Mammary epithelial cell (primary cell): ENCODE measurements at regions of chr2 and their contacts with region 1.

Region 1: GRCh38 chr2:14634201-14634884 is 1.8 kb downstream of the LRATD1 start:
- DNase-seq: peak; percentile 86
- H3K4me3 ChIP-seq: peak overlapping the region; percentile 59 to 83 (median 66)
- H3K27ac ChIP-seq: peak overlapping the region; percentile 50
- H3K4me1 ChIP-seq: peaks cover 46% of the 10 kb centered on the region
- H3K27me3 ChIP-seq: no peaks in the 10 kb centered on the region
- CTCF ChIP-seq: peak; percentile 66 to 90

Region 2: DNA sequence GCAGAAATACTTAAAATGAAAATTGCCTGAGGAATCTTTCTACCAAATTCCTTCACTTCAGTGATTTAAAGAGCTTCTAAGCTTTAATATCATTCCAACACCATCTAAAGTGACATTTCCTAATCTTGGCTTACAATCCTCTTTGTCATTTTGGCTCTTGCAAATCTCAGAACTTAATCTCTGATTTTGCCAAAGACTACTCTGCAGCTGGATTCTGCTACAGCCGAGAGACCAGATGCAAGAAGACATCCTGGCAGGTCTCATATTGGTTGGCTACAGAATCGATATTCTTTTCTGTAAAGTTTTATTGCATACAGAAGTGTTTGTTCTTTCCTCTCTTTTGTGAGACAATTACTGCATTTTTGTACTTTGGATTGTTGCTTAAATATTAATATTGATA is 718.3 kb before region 1 on chr2:
- CTCF ChIA-PET with region 1: no interaction called
- dilution Hi-C with region 1: no loop called
- in situ Hi-C with region 1: no loop called
- intact Hi-C with region 1: no loop called
- DNase-seq: no peak
- H3K4me3 ChIP-seq: no peak overlapping the region
- H3K27ac ChIP-seq: no peak overlapping the region
- H3K4me1 ChIP-seq: no peaks in the 10 kb centered on the region
- H3K27me3 ChIP-seq: no peaks in the 10 kb centered on the region
- CTCF ChIP-seq: no peak

Region 3: GRCh38 chr2:14385043-14385442 is 249.3 kb before region 1 on chr2:
- CTCF ChIA-PET with region 1: interaction called, 4 read pairs
- dilution Hi-C with region 1: no loop called
- in situ Hi-C with region 1: no loop called
- intact Hi-C with region 1: loop called (anchors 2 kb)
- DNase-seq: peak; percentile 9
- H3K4me3 ChIP-seq: no peak overlapping the region
- H3K27ac ChIP-seq: no peak overlapping the region
- H3K4me1 ChIP-seq: no peaks in the 10 kb centered on the region
- H3K27me3 ChIP-seq: no peaks in the 10 kb centered on the region
- CTCF ChIP-seq: peak; percentile 14 to 27

Region 4: GRCh38 chr2:14492920-14493503 is 141.3 kb before region 1 on chr2:
- CTCF ChIA-PET with region 1: no interaction called
- dilution Hi-C with region 1: no loop called
- in situ Hi-C with region 1: no loop called
- intact Hi-C with region 1: loop called (anchors 2 kb)
- DNase-seq: peak; percentile 96
- H3K4me3 ChIP-seq: no peak overlapping the region
- H3K27ac ChIP-seq: peak overlapping the region; percentile 53
- H3K4me1 ChIP-seq: peaks cover 8% of the 10 kb centered on the region
- H3K27me3 ChIP-seq: no peaks in the 10 kb centered on the region
- CTCF ChIP-seq: no peak

Region 5: DNA sequence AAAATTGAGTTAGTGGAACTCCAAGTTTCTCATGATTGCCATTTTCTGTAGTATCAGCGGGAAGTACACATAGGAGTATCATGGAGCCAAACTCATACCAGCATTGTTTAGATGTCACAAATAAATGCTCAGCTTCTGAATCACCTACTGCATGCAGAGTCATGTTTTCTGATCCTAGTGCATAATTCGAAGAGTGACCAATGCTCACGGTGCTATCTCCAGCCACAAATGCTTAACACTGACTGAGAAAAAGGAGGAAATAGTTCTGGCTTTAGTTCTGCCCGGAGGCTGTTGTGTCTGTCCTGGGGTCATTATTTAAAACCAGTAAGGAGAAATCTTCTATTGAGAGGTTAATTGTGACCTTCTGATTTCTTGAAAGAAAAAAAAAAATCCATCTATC is 47.2 kb before region 1 on chr2:
- CTCF ChIA-PET with region 1: no interaction called
- dilution Hi-C with region 1: no loop called
- in situ Hi-C with region 1: no loop called
- intact Hi-C with region 1: loop called (anchors 2 kb)
- DNase-seq: peak; percentile 86
- H3K4me3 ChIP-seq: no peak overlapping the region
- H3K27ac ChIP-seq: peak overlapping the region; percentile 49
- H3K4me1 ChIP-seq: peaks cover 11% of the 10 kb centered on the region
- H3K27me3 ChIP-seq: no peaks in the 10 kb centered on the region
- CTCF ChIP-seq: no peak

Region 6: DNA sequence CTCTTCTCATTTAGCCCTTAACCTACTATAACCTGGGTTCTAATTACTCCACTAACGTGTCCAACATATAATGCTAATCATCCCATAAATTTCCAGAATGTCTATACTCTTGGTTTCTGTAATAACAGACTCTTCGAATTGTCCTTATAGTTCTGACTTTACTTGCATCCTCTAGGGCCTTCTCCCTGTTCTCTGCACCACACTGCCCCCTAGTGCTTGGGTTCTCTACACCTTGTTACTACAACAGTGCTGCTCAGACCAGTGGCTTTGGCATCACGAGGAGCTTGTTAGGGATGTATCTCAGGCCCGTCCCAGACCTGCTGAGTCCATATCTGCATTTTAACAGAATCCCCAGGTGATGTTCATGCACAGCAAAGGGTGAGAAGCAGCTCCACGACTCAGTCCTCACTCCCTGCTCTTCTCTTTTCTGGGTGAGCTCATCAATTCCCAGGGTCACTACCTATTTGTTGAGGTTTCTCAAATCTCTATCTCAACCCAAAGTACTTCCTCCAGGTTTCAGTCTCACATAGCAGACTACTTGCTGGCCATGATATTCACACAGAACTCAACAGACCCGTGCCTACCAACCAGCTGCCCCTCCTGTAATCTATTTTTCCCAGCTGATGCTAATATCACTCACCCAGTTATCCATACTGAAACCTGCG is 942.9 kb after region 1 on chr2:
- CTCF ChIA-PET with region 1: no interaction called
- dilution Hi-C with region 1: no loop called
- in situ Hi-C with region 1: no loop called
- intact Hi-C with region 1: loop called (anchors 2 kb)
- DNase-seq: peak; percentile 66
- H3K4me3 ChIP-seq: no peak overlapping the region
- H3K27ac ChIP-seq: no peak overlapping the region
- H3K4me1 ChIP-seq: peaks cover 5% of the 10 kb centered on the region
- H3K27me3 ChIP-seq: no peaks in the 10 kb centered on the region
- CTCF ChIP-seq: peak; percentile 91 to 94